Testis (tissue), 5 donors: ENCODE measurements at regions of chr6 and their contacts with region 1.

Region 1: DNA sequence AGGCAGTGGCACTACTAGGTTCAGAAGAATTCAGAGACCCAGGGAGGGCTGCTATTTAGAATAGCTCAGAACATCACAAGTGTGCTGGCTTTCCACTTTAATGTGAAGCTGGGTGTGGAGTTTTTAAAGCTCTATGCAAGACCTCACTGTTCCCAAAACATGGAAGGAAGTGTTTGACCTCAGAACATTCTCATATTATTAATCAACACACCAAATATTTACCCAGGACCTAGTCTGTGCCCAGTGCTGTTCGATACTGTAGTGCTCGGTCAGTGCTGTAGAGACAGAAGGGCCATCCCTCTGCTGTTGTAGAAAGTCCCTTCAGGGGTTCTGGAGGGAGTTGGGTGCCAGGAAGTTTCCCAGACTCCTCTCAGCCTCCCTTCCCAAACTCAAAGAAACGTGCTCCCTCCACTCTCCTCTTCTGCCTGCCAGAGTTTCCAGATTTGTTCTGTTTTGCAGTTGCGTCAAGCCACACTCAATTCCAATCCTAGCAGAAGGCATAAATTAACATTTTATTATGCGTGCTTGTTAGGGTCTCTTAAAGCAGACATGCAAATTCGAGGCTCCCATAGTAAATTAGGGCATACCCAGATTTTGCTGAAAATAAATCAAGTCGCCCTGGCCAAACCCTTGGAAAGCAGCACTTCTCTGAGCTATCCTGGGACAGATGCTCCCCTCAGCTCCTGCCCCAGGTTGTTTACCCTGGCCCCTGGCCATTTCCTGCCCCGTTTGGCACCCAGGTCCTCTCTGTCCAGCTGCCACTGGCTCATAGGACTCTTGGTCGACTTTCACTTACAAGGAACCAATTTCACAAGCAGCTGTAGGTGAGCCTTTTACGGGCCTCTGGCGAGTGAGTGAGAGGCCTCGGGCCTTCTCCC is 248.6 kb downstream of the HIVEP2 start:
- DNase-seq: no peak
- H3K4me3 ChIP-seq: no peak overlapping the region
- H3K27ac ChIP-seq: no peak overlapping the region
- H3K4me1 ChIP-seq: no peaks in the 10 kb centered on the region
- H3K27me3 ChIP-seq: no peaks in the 10 kb centered on the region
- CTCF ChIP-seq: no peak
- POLR2A ChIP-seq: no peak

Region 2: GRCh38 chr6:142648036-142648451 is 48.3 kb before region 1 on chr6:
- intact Hi-C with region 1: no loop called
- DNase-seq: no peak
- H3K4me3 ChIP-seq: no peak overlapping the region
- H3K27ac ChIP-seq: no peak overlapping the region
- H3K4me1 ChIP-seq: no peaks in the 10 kb centered on the region
- H3K27me3 ChIP-seq: no peaks in the 10 kb centered on the region
- CTCF ChIP-seq: no peak
- POLR2A ChIP-seq: no peak

Region 3: GRCh38 chr6:143429970-143430369 is 733.6 kb after region 1 on chr6:
- intact Hi-C with region 1: loop called (anchors 5 kb)
- DNase-seq: no peak
- H3K4me3 ChIP-seq: no peak overlapping the region
- H3K27ac ChIP-seq: no peak overlapping the region
- H3K4me1 ChIP-seq: no peaks in the 10 kb centered on the region
- H3K27me3 ChIP-seq: no peaks in the 10 kb centered on the region
- CTCF ChIP-seq: no peak
- POLR2A ChIP-seq: no peak